ENCODE measurements at regions of chr1 and their contacts with region 1.

Region 1: GRCh38 chr1:85502625-85503083 is 37.7 kb upstream of the DDAH1 start:
- DNase-seq: peak; percentile 59
- ATAC-seq: peak; percentile 94
- H3K4me3 ChIP-seq: no peak overlapping the region
- H3K27ac ChIP-seq: no peak overlapping the region
- H3K4me1 ChIP-seq: peaks cover 0 to 4% of the 10 kb centered on the region in 2 experiments; a peak in 1 of 4 replicates
- H3K27me3 ChIP-seq: no peaks in the 10 kb centered on the region
- CTCF ChIP-seq: peak; percentile 66 to 82 (median 71)
- POLR2A ChIP-seq: no peak
- RAD21 ChIP-seq: peak; percentile 68

Region 2: DNA sequence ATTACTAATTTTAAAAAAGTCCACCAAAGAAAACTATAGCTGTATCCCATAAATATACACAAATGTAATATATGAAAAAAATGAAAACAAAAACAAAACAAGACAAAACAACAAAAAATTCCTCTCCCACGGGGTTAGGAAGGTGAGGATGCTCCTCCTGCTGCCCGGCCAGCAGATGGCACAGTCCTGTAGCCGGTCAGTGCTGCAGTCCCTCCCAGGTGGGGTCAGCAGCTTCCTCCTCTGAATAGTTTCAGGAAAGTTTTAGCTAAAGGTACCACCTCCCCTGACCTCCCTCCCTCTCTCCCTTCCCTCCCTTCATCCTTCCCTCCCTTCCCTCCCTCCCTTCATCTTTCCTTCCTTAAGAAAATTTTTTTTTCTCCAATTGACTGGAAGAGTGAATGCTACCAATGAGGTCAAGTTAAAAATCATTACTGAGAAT is 158.4 kb before region 1 on chr1:
- CTCF ChIA-PET with region 1: interaction called, 3 read pairs
- POLR2A ChIA-PET with region 1: no interaction called
- RAD21 ChIA-PET with region 1: no interaction called
- intact Hi-C with region 1: loop called (anchors 10 kb)
- DNase-seq: no peak
- ATAC-seq: peak; percentile 98
- H3K4me3 ChIP-seq: no peak overlapping the region
- H3K27ac ChIP-seq: no peak overlapping the region
- H3K4me1 ChIP-seq: peaks cover 29 to 32% of the 10 kb centered on the region in 2 experiments
- H3K27me3 ChIP-seq: no peaks in the 10 kb centered on the region
- CTCF ChIP-seq: peak; percentile 79 to 90 (median 84)
- POLR2A ChIP-seq: no peak
- RAD21 ChIP-seq: peak; percentile 82